Activated CD4-positive, alpha-beta memory T cell treated with anti-CD3 and anti-CD28 coated beads for 36 hours (primary cell): ENCODE measurements at regions of chr3 and their contacts with region 1.

Region 1: DNA sequence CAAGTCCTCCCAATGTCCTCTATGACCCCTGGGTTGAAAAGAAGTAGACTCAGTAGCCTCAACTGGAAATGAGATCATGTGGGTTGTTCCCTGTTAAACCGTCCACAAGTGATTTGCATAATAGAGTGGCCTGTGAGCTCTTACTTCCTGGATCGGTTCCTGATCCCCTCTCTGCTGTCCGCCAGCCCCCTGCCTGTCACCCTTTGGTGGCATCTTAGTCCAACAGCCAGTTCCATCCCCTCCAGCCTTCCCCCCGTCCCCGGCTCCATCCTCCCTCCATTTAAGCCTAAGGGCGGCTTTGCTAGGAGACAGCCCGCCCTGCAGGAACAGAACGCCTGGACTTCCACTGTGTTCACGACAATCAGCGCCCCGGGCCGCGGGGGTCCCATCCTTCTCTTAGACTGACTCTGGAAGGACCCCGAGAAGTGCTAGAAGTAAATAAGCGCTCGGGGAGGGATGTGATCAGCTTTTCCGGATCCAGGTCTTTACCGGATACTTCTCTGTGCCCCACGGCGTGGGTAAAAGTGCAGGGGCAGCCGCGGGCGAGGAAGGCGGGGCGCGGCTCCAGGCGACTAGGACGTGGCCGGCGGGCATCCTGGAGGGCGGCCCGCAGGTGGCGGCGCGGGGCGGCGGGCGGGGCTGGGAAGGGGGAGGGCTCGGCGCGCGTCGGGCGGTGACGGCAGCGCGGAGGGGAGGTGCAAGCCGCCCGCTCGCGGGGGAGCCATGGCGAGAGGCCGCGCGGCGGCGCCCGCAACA is 51.2 kb upstream of the ULK4 start:
- DNase-seq: peak; percentile 86
- H3K4me3 Mint-ChIP-seq: peak overlapping the region; percentile 82
- H3K27ac Mint-ChIP-seq: peak overlapping the region; percentile 90
- H3K4me1 Mint-ChIP-seq: peaks cover 43% of the 10 kb centered on the region
- H3K27me3 Mint-ChIP-seq: no peaks in the 10 kb centered on the region

Region 2: DNA sequence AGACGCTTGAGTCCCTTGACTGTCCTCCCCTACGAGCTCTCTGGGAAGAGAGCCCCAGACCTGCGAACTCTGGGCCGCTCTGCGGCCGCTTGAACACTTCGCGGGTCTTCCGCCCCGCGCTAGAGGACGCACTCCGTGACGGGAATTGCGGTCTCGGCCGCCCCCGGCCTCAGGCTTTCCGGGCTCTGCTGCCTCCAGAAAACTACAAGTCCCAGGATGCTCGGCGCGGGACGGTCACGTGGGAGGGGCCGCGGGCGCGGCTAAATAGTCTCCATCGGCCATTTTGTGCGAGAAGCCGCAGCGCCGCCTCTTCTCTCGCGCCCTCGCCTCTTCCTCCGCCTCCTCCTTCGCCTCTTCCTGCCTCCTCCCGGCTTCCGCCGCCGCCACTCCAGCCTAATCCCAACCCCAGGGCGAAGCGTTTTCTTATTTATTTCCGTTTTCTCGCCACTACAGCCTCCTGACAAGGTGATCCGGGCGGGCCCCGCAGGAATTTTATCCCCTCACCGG is 1703.6 kb before region 1 on chr3 and contains the start of gene EIF1B:
- CTCF ChIA-PET with region 1: no interaction called
- POLR2A ChIA-PET with region 1: no interaction called
- intact Hi-C with region 1: loop called (anchors 2 kb)
- DNase-seq: peak; percentile 99
- H3K4me3 Mint-ChIP-seq: peak within 1 kb of the TSS; percentile 96
- H3K27ac Mint-ChIP-seq: peak within 1 kb of the TSS; percentile 97
- H3K4me1 Mint-ChIP-seq: peaks cover 23% of the 10 kb centered on the region
- H3K27me3 Mint-ChIP-seq: no peaks in the 10 kb centered on the region
- total RNA-seq, gene EIF1B: 48.6 to 51.0 TPM

Region 3: DNA sequence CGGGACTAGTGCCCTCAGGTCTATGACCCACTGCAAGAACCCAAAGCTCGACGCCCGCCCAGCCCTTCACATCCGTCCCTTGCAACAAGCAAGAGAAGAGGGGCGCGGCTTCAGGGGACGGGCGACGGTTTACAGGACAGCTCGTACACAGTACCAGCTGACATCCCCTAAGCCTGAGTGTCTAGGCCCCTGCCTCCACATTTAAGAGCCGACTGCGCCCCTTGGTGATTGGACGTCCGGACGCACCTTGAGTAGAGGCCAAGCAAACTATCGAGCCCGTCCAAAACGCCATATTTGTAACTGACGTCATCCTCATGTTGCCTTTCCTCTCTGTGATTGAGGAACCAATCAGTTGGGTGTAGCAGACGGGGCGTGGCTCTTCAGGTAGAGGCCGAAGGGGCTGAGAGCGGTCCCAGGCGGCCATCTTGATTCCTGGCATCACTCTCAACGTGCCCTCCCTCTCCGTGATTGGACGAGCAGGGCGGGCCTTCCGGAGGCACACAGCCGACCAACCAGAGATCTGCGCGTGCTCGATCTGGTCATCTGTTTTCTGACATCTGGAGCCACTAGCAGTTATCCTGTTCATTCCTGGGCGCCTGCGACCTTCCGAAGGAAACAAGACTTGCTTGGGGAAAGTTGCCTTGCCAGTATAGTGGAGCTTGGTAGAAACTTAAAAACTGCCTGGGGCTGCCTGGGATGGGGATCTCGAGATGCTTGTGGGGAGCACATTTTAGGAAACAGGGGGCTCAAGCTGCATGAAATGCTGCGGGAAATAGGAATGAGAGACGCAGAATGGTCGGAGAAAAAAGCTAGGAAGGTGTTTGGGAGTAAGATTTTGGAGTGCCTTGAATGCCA is 1560.0 kb before region 1 on chr3:
- CTCF ChIA-PET with region 1: no interaction called
- POLR2A ChIA-PET with region 1: no interaction called
- intact Hi-C with region 1: loop called (anchors 10 kb)
- DNase-seq: peak; percentile 98
- H3K4me3 Mint-ChIP-seq: peak overlapping the region; percentile 93
- H3K27ac Mint-ChIP-seq: peak overlapping the region; percentile 96
- H3K4me1 Mint-ChIP-seq: peaks cover 32% of the 10 kb centered on the region
- H3K27me3 Mint-ChIP-seq: peaks cover 1% of the 10 kb centered on the region

Region 4: GRCh38 chr3:41900265-41900664 is 112.8 kb before region 1 on chr3:
- CTCF ChIA-PET with region 1: no interaction called
- POLR2A ChIA-PET with region 1: no interaction called
- intact Hi-C with region 1: no loop called
- DNase-seq: no peak
- H3K4me3 Mint-ChIP-seq: no peak overlapping the region
- H3K27ac Mint-ChIP-seq: no peak overlapping the region
- H3K4me1 Mint-ChIP-seq: no peaks in the 10 kb centered on the region
- H3K27me3 Mint-ChIP-seq: no peaks in the 10 kb centered on the region

Region 5: GRCh38 chr3:41915353-41915752 is 97.8 kb before region 1 on chr3:
- CTCF ChIA-PET with region 1: no interaction called
- POLR2A ChIA-PET with region 1: no interaction called
- intact Hi-C with region 1: loop called (anchors 10 kb)
- DNase-seq: no peak
- H3K4me3 Mint-ChIP-seq: no peak overlapping the region
- H3K27ac Mint-ChIP-seq: no peak overlapping the region
- H3K4me1 Mint-ChIP-seq: no peaks in the 10 kb centered on the region
- H3K27me3 Mint-ChIP-seq: no peaks in the 10 kb centered on the region

Region 6: DNA sequence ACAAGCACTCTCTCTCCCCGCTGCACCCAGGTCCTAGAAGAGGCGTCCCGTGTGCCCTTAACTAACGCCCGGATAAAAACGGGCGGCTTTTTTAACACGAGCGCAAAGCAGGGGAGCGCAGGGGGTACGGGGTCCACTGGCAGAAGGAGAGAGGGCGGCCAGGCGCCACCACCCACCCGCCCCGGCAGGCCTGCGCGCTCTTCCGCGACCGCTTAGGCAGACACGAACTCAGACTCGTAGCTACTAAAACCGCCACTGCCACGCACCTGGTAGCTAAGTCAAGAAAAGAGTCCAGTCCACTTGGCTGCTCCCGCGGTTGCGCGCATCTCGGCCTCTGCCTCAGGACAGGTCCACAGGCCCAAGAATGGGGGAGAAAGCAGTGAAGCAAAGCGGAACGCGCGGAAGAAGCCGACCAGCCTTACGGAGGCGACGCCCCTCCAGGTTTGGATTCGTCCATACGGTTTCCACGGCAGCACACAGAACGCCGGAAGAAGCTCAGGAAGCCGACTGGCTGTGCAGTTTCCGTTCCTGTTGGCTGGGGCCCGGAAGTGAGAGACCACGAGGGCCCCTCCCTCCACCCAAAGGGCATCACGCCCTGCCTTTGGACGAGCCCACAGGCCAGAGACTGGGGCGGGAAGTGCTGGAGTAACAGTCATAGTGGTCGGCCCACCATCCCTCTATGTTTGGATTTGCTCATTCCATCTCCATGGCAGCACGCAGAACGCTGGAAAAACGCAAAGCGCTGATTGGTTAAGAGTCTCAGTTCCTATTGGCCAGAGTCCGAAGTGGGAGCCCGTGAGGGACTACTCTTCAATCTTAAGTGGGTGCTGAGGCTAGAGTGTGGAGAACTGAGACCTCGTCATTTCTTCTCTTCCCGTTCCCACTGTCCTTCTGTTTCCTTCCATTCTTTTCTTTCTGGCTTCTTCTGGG is 51.1 kb before region 1 on chr3 and contains the start of gene ULK4:
- CTCF ChIA-PET with region 1: interaction called, 3 read pairs
- POLR2A ChIA-PET with region 1: interaction called, 8 read pairs
- intact Hi-C with region 1: loop called (anchors 1 kb)
- DNase-seq: peak; percentile 98
- H3K4me3 Mint-ChIP-seq: peak within 1 kb of the TSS; percentile 90
- H3K27ac Mint-ChIP-seq: peak within 1 kb of the TSS; percentile 80
- H3K4me1 Mint-ChIP-seq: peaks cover 17% of the 10 kb centered on the region
- H3K27me3 Mint-ChIP-seq: peaks cover under 1% of the 10 kb centered on the region
- total RNA-seq, gene ULK4: 9.5 to 10.8 TPM

Region 7: DNA sequence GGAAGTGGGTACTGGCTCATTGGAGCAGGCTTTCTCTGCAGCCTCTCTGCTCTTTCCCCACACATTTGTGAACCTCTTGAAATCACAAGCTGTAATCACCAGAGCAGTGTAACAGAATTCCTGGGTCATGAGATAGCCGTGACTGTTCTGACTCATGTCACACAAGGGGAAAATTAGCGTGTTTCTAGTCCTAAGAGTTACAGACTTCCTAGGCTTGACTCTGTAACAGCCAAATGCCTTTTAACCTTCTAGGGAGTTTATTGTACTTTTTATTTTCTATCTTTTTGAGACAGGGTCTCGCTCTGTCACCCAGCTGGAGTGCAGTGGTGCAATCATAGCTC is 23.3 kb after region 1 on chr3:
- CTCF ChIA-PET with region 1: no interaction called
- POLR2A ChIA-PET with region 1: no interaction called
- intact Hi-C with region 1: no loop called
- DNase-seq: no peak
- H3K4me3 Mint-ChIP-seq: no peak overlapping the region
- H3K27ac Mint-ChIP-seq: no peak overlapping the region
- H3K4me1 Mint-ChIP-seq: peaks cover 18% of the 10 kb centered on the region
- H3K27me3 Mint-ChIP-seq: no peaks in the 10 kb centered on the region

Region 8: DNA sequence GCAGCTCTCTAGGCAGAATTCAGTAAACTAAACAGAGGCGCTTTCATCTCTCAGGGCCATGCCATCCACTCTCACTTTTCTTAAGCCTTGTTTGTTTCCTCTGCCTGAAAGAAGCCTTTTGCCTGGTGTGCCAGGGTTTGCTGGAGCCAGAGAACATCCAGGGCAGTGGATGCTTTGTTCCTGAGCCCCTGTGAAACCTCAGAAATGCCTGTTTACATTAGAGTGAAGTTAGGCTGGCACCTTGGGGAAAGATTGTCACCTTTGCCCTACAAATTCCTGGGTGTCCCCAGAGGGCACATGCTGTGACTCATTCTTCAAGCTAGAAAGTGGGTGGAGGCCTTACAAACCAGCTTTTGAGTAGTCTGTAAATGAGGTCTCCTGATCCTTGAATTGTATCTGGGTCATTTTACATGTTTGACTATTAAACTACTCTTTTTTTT is 67.4 kb after region 1 on chr3:
- CTCF ChIA-PET with region 1: no interaction called
- POLR2A ChIA-PET with region 1: interaction called, 5 read pairs
- intact Hi-C with region 1: loop called (anchors 1 kb)
- DNase-seq: peak; percentile 51
- H3K4me3 Mint-ChIP-seq: no peak overlapping the region
- H3K27ac Mint-ChIP-seq: peak overlapping the region; percentile 80
- H3K4me1 Mint-ChIP-seq: peaks cover 59% of the 10 kb centered on the region
- H3K27me3 Mint-ChIP-seq: no peaks in the 10 kb centered on the region

Region 9: DNA sequence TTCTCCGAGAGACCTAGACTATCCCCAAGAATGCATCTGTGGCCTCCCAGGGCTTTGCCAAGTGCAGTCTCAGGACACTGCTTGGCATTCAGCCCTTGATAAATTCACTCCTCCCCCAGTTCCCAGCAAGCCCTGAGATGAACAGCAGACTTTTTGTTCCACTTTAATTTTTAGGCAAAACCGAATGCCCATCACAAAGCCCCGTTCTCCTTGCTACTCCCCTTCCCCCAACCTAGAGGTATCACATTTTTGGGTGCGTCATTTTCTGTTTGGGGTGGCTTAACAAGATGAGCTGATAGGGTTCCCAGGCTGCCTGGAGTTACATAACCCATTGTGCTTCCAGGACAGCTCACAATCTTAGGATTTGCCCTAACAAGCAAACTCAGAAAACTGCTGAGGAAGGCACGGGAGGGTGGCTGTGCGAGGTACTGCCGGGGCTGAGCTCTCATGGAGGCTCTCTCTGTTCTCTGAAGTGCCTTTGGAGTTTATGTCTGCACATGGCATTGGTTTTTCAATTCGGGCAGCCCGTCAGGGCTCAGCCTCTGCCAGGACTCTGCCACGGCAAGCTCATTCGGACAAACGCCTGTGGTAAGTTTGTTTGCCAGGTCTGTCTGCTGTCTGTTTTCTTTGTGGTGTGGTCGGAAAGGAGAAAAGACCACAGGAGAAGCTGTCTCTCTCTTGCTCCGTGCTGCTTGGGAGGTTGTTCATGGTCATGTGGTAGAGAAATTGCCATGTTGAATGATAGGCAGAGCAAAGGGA is 78.0 kb after region 1 on chr3 and contains the start of gene TRAK1:
- CTCF ChIA-PET with region 1: interaction called, 4 read pairs
- POLR2A ChIA-PET with region 1: interaction called, 4 read pairs
- intact Hi-C with region 1: loop called (anchors 2 kb)
- DNase-seq: no peak
- H3K4me3 Mint-ChIP-seq: no peak within 1 kb of the TSS
- H3K27ac Mint-ChIP-seq: no peak within 1 kb of the TSS
- H3K4me1 Mint-ChIP-seq: peaks cover 51% of the 10 kb centered on the region
- H3K27me3 Mint-ChIP-seq: no peaks in the 10 kb centered on the region
- total RNA-seq, gene TRAK1: 19.0 to 19.3 TPM

Region 10: DNA sequence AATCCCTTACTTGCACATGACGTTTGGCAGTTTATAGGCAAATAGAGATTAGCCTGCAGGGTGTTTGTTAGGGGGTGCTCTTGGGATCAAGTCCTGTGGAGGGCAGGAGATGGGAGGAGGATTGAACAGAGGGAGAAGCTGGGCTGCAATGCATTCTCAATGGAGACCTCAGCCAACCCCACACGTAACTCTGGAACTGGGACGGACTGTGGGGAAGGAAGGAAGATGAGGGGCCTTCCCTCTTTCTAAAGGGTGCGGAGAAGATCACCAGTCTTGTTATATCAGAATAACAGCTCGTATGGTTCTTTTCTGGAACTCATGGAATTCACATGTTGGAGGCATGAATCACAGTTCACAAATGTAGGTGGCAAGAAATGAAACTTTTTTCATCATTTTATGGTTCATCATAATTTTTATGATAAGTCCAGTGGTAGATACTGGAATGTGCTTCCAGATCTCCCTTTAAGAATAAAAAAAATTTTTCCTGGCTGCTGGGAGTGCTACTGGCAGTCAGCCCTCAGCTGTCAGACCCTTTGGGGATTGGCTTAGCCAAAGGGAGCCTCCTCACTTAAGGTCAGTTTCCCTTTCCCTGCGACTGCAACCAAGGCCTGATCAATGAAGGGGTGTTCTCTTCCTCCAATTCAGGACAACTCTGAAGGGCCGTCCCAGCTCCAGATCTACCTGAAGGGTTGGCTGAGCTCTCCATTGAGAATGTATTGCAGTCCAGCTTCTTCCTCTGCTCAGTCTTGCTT is 417.8 kb after region 1 on chr3:
- CTCF ChIA-PET with region 1: no interaction called
- POLR2A ChIA-PET with region 1: no interaction called
- intact Hi-C with region 1: no loop called
- DNase-seq: no peak
- H3K4me3 Mint-ChIP-seq: no peak overlapping the region
- H3K27ac Mint-ChIP-seq: no peak overlapping the region
- H3K4me1 Mint-ChIP-seq: no peaks in the 10 kb centered on the region
- H3K27me3 Mint-ChIP-seq: peaks cover 23% of the 10 kb centered on the region